PC-9 (cell line): ENCODE measurements at regions of chr3 and their contacts with region 1.

Region 1: GRCh38 chr3:161957467-161957866 is 460.9 kb downstream of the OTOL1 start:
- DNase-seq: no peak
- H3K4me3 ChIP-seq: no peak overlapping the region
- H3K27ac ChIP-seq: no peak overlapping the region
- H3K4me1 ChIP-seq: no peaks in the 10 kb centered on the region
- H3K27me3 ChIP-seq: no peaks in the 10 kb centered on the region
- CTCF ChIP-seq: no peak

Region 2: DNA sequence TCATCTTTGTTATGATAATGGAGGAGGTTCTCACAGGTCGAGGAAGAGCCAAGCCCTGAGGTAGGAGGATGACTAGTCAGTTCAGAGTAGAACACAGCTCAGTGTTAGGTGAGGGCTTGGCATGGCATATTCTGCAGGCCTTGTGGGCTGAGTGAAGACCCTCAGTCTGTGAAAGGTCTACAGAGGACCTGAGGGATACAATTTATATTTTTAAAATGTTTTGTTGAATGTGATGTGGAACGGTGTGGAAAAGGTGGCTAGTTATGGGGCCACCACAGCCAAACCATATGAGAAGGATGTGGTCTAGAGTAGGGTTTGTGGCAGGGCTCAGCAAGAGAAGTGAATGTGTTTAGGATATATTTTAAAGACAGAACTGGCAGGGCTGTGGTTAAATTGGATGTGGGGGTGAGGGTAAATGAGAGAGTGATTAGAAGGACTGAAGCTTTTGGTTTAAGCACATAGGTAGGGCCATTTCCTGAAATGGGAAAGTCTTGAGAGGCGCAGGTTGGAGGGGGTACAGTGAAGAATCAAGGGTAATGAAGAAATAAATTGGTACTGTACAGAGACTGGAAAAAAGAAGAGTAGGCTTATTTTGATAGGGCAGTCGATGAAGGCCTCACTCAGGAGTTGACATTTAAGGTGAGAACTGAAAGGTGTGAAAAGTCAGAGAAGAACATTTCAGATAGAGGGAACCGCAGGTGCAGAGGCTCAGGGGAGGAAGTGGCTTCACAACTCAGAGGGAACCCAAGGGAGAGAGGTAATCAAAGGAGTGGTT is 646.6 kb before region 1 on chr3:
- CTCF ChIA-PET with region 1: no interaction called
- POLR2A ChIA-PET with region 1: no interaction called
- intact Hi-C with region 1: no loop called
- DNase-seq: no peak
- H3K4me3 ChIP-seq: no peak overlapping the region
- H3K27ac ChIP-seq: no peak overlapping the region
- H3K4me1 ChIP-seq: peaks cover 16% of the 10 kb centered on the region
- H3K27me3 ChIP-seq: no peaks in the 10 kb centered on the region
- CTCF ChIP-seq: no peak

Region 3: DNA sequence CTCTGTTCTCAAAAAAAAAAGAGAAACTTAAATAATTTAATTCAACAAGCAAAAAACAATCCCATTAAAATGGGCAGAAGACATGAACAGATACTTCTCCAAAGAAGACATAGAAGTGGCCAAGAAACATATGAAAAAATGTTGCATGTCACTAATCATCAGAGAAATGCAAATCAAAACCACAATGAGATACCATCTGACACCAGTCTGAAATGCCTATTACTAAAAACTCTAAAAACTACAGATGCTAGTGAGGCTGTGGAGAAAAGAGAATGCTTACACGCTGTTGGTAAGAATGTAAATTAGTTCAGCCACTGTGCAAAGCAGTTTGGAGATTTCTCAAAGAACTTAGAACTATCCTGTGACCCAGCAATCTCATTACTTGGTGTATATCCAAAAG is 78.0 kb before region 1 on chr3:
- CTCF ChIA-PET with region 1: no interaction called
- POLR2A ChIA-PET with region 1: no interaction called
- intact Hi-C with region 1: no loop called
- DNase-seq: no peak
- H3K4me3 ChIP-seq: no peak overlapping the region
- H3K27ac ChIP-seq: no peak overlapping the region
- H3K4me1 ChIP-seq: no peaks in the 10 kb centered on the region
- H3K27me3 ChIP-seq: no peaks in the 10 kb centered on the region
- CTCF ChIP-seq: no peak

Region 4: DNA sequence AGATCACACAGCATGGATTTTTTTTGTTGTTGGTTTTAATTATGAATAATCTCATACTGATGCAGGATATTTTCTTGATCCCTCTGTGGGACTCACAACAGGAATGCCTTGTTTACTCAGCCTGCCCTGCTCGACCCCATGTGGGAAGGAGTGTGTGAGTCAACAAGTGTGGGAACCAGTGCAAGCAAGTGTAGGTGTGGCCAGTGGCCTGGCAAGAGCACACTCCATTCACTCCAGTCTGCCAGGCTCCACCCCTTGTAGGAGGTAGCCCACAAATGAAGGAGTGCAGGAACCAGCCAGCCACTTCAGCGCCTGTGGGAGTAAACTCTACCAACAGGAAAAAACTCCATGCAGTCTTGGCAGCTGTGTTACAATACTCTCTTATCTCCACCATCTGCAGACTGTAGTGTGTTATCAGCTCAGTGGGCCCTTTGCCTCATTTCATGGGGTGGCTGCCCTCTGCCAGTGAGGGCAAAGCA is 67.3 kb before region 1 on chr3:
- CTCF ChIA-PET with region 1: no interaction called
- POLR2A ChIA-PET with region 1: no interaction called
- intact Hi-C with region 1: no loop called
- DNase-seq: peak; percentile 68 to 83
- H3K4me3 ChIP-seq: no peak overlapping the region
- H3K27ac ChIP-seq: no peak overlapping the region
- H3K4me1 ChIP-seq: 0 out of 2 replicates have a peak, but pooled peaks cover 5% of the 10 kb centered on the region
- H3K27me3 ChIP-seq: no peaks in the 10 kb centered on the region
- CTCF ChIP-seq: no peak

Region 5: DNA sequence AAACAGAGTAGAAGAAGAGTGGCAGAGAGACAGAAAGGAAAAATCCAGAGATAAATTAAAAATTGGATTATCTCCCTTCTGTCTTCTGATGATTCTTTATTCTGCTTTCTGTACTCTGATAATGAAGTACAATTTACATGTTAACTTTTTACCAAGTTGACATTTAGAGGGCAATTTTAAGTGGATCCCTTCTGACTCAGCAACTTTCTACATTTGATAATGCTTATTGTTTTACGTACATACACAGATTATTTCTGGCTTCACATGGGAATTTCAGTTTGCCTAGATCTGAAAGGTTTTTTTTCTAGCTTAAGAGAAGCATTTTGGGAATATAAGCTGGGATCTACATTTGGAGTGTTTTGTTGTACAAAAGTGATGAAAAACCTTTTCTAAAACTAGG is 30.5 kb after region 1 on chr3:
- CTCF ChIA-PET with region 1: no interaction called
- POLR2A ChIA-PET with region 1: interaction called, 5 read pairs
- intact Hi-C with region 1: loop called (anchors 1 kb)
- DNase-seq: no peak
- H3K4me3 ChIP-seq: no peak overlapping the region
- H3K27ac ChIP-seq: no peak overlapping the region
- H3K4me1 ChIP-seq: no peaks in the 10 kb centered on the region
- H3K27me3 ChIP-seq: no peaks in the 10 kb centered on the region
- CTCF ChIP-seq: no peak